Mucosa of descending colon (tissue), 3 donors: ENCODE measurements at regions of chr21 and their contacts with region 1.

Region 1: DNA sequence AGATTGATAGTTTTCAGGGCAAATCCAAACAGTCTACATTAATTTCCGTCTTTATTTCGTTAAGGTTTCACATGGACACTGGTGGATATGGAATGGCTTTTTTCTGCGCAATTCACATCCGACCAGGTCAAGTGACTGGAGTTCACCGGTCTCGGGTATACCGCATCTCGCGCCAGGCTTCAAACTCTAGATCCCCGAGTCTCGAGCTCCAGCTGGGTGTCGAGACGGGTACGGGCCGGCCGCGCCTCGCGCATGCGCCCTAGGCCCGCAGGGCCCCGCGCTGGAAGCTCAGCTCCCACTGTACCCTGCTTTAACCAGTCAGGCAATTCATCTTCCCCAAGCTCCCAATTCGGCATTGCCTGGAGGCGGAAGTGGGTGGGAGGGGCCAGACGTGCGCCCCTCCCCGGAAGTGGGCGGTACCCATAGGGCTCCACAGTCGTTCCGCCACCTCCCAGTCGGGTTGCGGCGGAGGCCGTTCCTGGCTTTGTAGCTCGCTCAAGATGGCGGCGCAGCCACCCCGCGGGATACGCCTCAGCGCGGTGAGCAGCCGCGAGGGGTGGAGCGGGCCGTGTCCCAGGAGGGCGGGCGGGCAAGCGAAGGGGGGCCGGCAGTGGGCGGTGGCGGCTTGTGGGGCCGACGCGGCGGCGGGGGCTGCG is at the start of gene MORC3:
- DNase-seq: peak; percentile 98 to 99 (median 99)
- ATAC-seq: peak; percentile 97
- H3K4me3 ChIP-seq: peak within 1 kb of the TSS; percentile 87
- H3K4me1 ChIP-seq: peaks cover 18% of the 10 kb centered on the region
- CTCF ChIP-seq: peak; percentile 22
- total RNA-seq, gene MORC3: 27.9 to 42.1 (median 29.9) TPM

Region 2: DNA sequence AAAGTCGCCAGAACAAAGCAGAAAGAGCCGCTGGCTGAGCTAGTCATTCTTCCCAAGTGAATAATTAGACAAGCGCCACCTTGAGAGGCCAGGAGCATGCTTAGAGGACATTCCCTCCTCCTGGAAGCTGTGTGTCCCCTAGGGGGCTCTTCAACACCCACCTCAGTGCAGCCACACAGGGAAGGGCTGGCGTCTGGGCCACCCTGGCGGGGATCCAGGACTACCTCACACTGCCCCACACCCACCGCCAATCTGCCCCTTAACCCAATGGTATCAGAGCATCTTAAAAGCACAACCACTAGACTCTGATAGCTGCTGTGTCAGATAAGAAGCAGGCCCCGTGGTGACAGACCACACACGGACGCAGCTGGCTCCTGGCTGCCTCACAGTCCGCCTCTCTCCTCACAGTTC is 284.5 kb before region 1 on chr21:
- intact Hi-C with region 1: no loop called
- DNase-seq: no peak
- ATAC-seq: no peak
- H3K4me3 ChIP-seq: no peak overlapping the region
- H3K4me1 ChIP-seq: no peaks in the 10 kb centered on the region
- CTCF ChIP-seq: no peak

Region 3: GRCh38 chr21:36156339-36156814 is 163.5 kb before region 1 on chr21:
- intact Hi-C with region 1: loop called in 1 of 2 experiments (anchors 10 kb)
- DNase-seq: peak; percentile 100
- ATAC-seq: peak; percentile 86
- H3K4me3 ChIP-seq: peak overlapping the region; percentile 54
- H3K4me1 ChIP-seq: peaks cover 21% of the 10 kb centered on the region
- CTCF ChIP-seq: no peak